ENCODE measurements at regions of chr16 and their contacts with region 1.

Region 1: DNA sequence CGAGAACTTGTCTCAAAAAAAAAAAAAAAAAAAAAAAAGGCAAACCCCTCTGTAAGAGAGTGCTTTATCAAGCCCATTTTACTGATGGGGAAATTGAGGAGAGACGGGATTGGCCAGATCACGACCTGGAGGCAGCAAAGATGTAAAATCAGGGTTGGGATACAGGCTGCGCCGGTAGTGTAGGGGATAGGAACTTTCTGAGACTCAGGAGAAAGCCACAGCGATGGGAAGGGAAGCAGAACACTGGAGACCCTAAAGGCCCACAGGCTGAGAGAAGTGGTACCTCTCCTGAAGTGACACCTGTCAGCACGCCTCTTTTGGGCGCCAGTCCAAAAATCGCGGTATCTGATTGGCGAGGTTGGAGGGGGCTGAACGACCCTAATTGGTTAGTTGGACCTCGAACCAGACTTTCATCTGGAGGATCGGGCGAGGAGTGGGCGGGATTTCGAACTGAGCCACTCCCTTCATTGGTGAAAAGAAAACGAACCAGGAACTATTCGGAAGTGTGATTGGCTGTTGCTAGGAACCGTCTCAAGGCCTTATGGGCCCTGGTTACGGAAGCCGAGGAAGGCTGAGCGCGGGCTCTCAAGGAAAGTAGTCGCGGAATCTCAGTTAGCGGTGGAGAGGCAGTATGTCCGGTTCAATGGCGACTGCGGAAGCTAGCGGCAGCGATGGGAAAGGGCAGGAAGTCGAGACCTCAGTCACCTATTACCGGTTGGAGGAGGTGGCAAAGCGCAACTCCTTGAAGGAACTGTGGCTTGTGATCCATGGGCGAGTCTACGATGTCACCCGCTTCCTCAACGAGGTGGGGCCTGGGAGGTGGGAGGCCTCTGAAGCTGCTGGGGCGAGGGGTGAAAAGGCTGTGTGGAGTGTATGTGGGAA is at the start of gene CYB5B:
- DNase-seq: peak; percentile 90 to 99 (median 96)
- ATAC-seq: peak; percentile 90
- H3K4me3 ChIP-seq: peak within 1 kb of the TSS; percentile 96
- H3K4me3 Mint-ChIP-seq: peak within 1 kb of the TSS; percentile 92
- H3K27ac ChIP-seq: peak within 1 kb of the TSS; percentile 58 to 84
- H3K27ac Mint-ChIP-seq: peak within 1 kb of the TSS; percentile 86
- H3K4me1 ChIP-seq: peaks cover 20% of the 10 kb centered on the region
- H3K4me1 Mint-ChIP-seq: peaks cover 36% of the 10 kb centered on the region
- H3K27me3 ChIP-seq: no peaks in the 10 kb centered on the region
- H3K27me3 Mint-ChIP-seq: no peaks in the 10 kb centered on the region
- CTCF ChIP-seq: no peak
- total RNA-seq, gene CYB5B: 16.0 to 18.3 TPM

Region 2: DNA sequence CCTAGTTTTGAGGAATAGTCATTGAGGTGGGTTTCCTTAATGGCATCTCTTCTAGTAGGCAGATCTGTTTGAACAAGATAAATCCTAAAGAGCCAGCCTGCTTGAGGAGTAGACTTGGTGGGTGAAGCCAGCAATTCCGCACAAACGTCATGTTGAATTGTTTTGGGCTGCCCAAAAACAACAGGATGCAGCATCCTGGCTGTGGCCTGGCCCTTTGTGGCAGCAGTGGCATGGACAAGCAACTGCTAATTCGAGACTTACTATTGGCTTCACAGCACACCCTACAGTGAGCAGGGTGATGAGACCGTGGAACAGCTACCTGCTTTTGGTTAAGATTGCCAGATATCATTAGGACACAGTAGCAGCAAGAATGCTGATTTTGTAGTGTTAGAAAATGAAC is 122.4 kb before region 1 on chr16:
- CTCF ChIA-PET with region 1: no interaction called
- POLR2A ChIA-PET with region 1: no interaction called
- intact Hi-C with region 1: no loop called
- DNase-seq: no peak
- ATAC-seq: no peak
- H3K4me3 ChIP-seq: no peak overlapping the region
- H3K4me3 Mint-ChIP-seq: no peak overlapping the region
- H3K27ac ChIP-seq: no peak overlapping the region
- H3K27ac Mint-ChIP-seq: no peak overlapping the region
- H3K4me1 ChIP-seq: no peaks in the 10 kb centered on the region
- H3K4me1 Mint-ChIP-seq: no peaks in the 10 kb centered on the region
- H3K27me3 ChIP-seq: no peaks in the 10 kb centered on the region
- H3K27me3 Mint-ChIP-seq: no peaks in the 10 kb centered on the region
- CTCF ChIP-seq: no peak

Region 3: DNA sequence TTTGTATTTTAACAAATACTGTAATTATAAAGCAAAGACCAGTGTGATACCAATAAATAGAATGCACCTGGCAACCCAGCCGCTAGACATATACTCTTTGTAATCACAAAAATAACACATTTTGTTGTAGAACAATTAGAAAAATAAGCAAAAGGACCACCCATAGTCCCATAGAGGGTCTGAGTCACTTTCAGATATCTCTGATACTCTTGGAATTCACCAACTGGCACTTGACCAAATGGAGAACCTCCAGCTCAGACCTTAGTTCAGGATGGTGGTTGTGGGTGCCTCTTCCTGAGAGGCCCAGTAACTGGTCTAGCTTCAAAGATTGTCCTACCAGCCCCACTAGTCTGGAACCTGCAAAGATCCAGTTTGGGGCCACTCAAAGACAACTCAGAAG is 37.7 kb before region 1 on chr16:
- CTCF ChIA-PET with region 1: no interaction called
- POLR2A ChIA-PET with region 1: no interaction called
- intact Hi-C with region 1: loop called in 1 of 2 experiments (anchors 2 kb)
- DNase-seq: no peak
- ATAC-seq: no peak
- H3K4me3 ChIP-seq: no peak overlapping the region
- H3K4me3 Mint-ChIP-seq: peak overlapping the region; percentile 90
- H3K27ac ChIP-seq: no peak overlapping the region
- H3K27ac Mint-ChIP-seq: peak overlapping the region; percentile 95
- H3K4me1 ChIP-seq: peaks cover 20% of the 10 kb centered on the region
- H3K4me1 Mint-ChIP-seq: peaks cover 34% of the 10 kb centered on the region
- H3K27me3 ChIP-seq: no peaks in the 10 kb centered on the region
- H3K27me3 Mint-ChIP-seq: no peaks in the 10 kb centered on the region
- CTCF ChIP-seq: no peak

Region 4: DNA sequence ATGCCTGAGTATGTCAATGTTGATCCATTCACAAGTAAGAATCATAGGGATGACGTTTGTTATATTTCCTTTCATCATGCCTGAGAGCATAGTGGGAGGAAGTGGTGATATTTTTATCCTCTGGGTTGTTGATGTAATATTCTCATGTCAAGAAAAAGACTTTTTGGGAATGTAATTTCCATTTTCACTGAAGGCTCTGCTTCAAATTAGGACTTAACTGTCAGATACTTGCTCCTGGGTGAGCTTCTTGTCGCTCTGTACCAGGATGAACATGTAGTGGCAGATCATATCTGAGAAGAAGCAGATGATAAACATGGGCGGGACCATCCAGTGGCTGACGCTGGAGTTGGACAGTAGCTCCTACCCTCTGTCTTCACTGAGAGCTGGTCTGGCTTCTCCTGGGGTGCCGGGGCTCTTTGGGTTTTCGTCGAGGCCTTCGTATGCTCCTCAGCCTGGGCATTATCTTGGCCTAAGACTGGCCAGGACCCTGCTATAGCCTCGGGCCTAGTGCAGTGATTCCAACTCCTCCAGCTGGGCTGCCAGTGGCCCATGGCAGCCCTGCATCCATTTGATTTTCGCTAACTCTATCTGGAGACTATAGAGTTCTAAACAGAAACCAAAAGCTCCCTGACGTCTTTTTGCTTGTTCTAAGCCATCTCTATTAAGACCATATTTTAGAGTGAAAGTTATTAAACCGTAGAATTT is 19.8 kb after region 1 on chr16:
- CTCF ChIA-PET with region 1: interaction called, 3 read pairs
- POLR2A ChIA-PET with region 1: interaction called, 21 read pairs
- intact Hi-C with region 1: loop called in 1 of 2 experiments (anchors 2 kb)
- DNase-seq: peak in 11 of 14 experiments; percentile 4 to 76 (median 25)
- ATAC-seq: peak; percentile 78
- H3K4me3 ChIP-seq: peak overlapping the region; percentile 32
- H3K4me3 Mint-ChIP-seq: peak overlapping the region; percentile 88
- H3K27ac ChIP-seq: peak overlapping the region; percentile 73 to 79
- H3K27ac Mint-ChIP-seq: peak overlapping the region; percentile 99
- H3K4me1 ChIP-seq: peaks cover 23% of the 10 kb centered on the region
- H3K4me1 Mint-ChIP-seq: peaks cover 43% of the 10 kb centered on the region
- H3K27me3 ChIP-seq: no peaks in the 10 kb centered on the region
- H3K27me3 Mint-ChIP-seq: no peaks in the 10 kb centered on the region
- CTCF ChIP-seq: no peak

Region 5: DNA sequence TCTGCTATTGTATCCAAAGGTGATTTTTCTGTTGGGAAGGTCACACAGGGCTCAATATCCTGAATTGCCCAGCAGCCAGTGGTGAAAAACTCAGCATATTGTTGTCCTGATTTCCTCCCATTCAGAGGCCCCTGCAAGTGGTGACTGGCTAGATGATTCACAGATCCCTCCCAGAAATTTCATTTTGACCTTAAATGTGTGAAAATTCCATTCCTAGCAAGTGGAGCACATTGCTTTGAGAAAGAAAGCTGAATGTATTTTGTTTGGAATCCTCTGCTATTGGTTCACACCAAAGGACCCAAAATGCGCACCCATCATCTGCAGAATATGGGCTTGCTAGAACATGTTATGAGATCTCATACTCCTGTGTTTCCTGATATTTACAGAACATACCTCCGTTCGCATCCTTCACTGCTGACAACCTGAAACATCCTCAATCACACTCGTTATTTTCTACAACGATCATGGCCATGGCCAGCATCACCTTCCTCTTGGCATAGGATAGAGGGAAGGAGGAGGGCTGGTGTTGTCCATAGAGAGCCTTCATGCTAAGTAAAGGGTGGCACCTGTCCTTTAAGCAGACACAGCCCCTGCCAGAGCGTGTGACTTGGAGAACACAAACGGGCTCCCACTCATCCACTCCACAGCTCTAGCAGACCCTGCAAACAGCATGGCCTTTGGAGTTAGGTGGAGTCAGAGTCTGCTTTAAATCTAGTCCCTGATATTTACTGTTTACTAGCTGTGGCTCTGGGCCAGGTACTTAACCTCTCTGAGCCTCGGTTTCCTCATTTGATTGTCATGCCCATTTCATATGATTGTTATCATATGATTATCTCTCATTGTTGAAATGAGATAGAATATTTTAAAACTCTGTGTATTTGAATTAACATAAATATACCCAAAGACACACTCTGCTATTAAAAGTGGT is 111.1 kb after region 1 on chr16:
- CTCF ChIA-PET with region 1: no interaction called
- POLR2A ChIA-PET with region 1: no interaction called
- intact Hi-C with region 1: no loop called
- DNase-seq: no peak
- ATAC-seq: no peak
- H3K4me3 ChIP-seq: no peak overlapping the region
- H3K4me3 Mint-ChIP-seq: no peak overlapping the region
- H3K27ac ChIP-seq: no peak overlapping the region
- H3K27ac Mint-ChIP-seq: no peak overlapping the region
- H3K4me1 ChIP-seq: peaks cover 6% of the 10 kb centered on the region
- H3K4me1 Mint-ChIP-seq: peaks cover 8% of the 10 kb centered on the region
- H3K27me3 ChIP-seq: no peaks in the 10 kb centered on the region
- H3K27me3 Mint-ChIP-seq: no peaks in the 10 kb centered on the region
- CTCF ChIP-seq: no peak

Region 6: DNA sequence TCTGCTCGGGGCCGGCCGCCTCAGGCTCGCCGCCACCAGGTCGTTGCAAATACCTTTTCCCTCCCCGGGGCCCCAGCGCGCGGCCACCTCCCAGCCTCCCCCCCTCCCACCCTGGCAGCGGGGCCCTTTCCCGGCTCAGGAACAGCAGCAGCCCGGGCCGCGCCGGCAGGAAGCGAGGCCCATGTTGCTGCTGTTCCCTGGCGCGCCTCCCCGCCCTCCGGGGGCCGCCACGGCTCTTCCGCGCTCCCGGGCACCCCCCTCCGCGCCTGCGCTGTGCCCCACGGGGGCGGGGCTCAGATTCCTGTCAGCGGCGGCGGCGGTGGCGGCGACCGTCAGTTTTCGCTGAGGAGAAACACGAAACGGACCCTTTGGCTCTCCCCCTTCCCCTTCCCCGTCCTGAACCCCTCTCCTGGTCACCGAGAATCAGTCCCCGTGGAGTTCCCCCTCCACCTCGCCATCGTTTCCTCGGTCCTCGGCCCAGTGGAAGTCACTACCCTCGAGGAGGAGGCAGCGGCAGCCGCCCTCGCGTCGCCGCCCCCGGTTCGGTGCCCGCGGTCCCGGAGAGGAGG is 141.5 kb after region 1 on chr16 and contains the start of gene NFAT5:
- CTCF ChIA-PET with region 1: no interaction called
- POLR2A ChIA-PET with region 1: interaction called, 5 read pairs
- intact Hi-C with region 1: loop called in 1 of 2 experiments (anchors 10 kb)
- DNase-seq: peak; percentile 71 to 95 (median 88)
- ATAC-seq: peak; percentile 80
- H3K4me3 ChIP-seq: peak within 1 kb of the TSS; percentile 84
- H3K4me3 Mint-ChIP-seq: peak within 1 kb of the TSS; percentile 100
- H3K27ac ChIP-seq: peak within 1 kb of the TSS; percentile 75 to 93
- H3K27ac Mint-ChIP-seq: peak within 1 kb of the TSS; percentile 96
- H3K4me1 ChIP-seq: peaks cover 31% of the 10 kb centered on the region
- H3K4me1 Mint-ChIP-seq: peaks cover 47% of the 10 kb centered on the region
- H3K27me3 ChIP-seq: no peaks in the 10 kb centered on the region
- H3K27me3 Mint-ChIP-seq: no peaks in the 10 kb centered on the region
- CTCF ChIP-seq: no peak
- total RNA-seq, gene NFAT5: 19.5 to 21.2 TPM

Region 7: DNA sequence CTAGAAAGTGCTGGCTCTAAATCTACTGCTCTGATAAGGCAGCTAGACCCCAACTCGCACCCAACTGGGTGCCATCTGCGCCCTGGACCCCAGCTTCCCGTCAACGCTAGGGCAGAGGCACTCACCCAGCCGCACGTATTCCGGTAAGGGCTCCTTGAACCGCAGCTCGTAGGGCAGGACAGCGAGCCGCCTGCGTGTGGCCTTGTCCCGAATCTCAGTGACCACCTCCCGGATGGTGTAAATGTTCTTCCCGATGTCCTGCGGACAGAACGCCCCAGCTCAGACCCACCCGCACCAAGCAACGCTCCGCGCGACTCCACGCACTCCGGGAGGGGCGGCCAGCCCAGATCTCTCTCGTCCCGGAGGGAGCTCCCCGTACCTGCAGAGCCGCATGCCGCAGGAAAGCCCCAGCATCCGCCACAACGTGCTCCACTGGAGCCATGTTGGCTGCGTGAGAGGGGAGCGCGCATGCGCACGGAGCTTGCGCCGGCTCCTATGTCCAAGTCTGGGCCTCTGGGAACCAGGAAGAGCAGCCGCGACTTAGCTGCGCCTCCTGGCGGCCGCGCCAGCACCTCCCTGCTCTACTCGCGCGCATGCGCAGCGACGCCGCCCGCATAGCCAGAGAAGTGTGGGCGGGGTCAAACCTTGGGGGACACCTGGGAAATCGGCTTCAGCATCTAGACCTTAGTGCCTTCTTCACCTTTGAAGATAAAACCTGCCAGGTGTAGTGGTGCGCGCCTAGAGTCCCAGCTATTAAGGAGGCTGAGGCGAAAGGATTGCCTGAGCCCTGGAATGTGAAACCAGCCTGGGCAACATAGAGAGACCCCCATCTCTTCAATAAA is 330.4 kb after region 1 on chr16 and contains the start of gene NOB1:
- CTCF ChIA-PET with region 1: no interaction called
- POLR2A ChIA-PET with region 1: interaction called, 5 read pairs
- intact Hi-C with region 1: loop called in 1 of 2 experiments (anchors 10 kb)
- DNase-seq: peak; percentile 92 to 100 (median 97)
- ATAC-seq: peak; percentile 96
- H3K4me3 ChIP-seq: peak within 1 kb of the TSS; percentile 100
- H3K4me3 Mint-ChIP-seq: peak within 1 kb of the TSS; percentile 100
- H3K27ac ChIP-seq: peak within 1 kb of the TSS; percentile 71 to 78
- H3K27ac Mint-ChIP-seq: peak within 1 kb of the TSS; percentile 89
- H3K4me1 ChIP-seq: peaks cover 24% of the 10 kb centered on the region
- H3K4me1 Mint-ChIP-seq: peaks cover 34% of the 10 kb centered on the region
- H3K27me3 ChIP-seq: no peaks in the 10 kb centered on the region
- H3K27me3 Mint-ChIP-seq: no peaks in the 10 kb centered on the region
- CTCF ChIP-seq: peak; percentile 88
- total RNA-seq, gene NOB1: 31.0 to 33.9 TPM